BJ (cell line): ENCODE measurements at regions of chr7 and their contacts with region 1.

Region 1: DNA sequence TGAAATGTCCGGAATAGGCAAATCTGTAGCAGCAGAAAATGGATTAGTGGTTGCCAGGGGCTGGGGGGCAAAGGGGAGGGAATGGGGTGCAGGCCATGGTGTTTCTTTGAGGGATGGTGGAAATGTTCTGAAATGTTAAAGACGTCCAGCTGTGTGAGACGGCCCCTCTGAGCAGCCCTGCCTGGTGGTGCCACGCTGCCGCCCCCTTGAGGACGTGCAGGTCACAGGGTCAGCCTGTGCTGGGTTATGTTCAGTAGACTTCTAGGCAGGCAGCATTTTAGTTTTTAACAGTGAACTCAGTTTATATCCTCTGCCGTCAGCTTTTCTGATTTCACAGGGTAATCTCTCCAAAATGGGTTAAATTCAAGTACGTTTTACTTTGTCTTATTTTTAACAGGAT is 9.4 kb downstream of the NUB1 start:
- DNase-seq: no peak
- H3K4me3 ChIP-seq: no peak overlapping the region
- H3K27me3 ChIP-seq: no peaks in the 10 kb centered on the region
- CTCF ChIP-seq: 0 out of 2 replicates have a peak, but pooled peaks have one; percentile 17

Region 2: DNA sequence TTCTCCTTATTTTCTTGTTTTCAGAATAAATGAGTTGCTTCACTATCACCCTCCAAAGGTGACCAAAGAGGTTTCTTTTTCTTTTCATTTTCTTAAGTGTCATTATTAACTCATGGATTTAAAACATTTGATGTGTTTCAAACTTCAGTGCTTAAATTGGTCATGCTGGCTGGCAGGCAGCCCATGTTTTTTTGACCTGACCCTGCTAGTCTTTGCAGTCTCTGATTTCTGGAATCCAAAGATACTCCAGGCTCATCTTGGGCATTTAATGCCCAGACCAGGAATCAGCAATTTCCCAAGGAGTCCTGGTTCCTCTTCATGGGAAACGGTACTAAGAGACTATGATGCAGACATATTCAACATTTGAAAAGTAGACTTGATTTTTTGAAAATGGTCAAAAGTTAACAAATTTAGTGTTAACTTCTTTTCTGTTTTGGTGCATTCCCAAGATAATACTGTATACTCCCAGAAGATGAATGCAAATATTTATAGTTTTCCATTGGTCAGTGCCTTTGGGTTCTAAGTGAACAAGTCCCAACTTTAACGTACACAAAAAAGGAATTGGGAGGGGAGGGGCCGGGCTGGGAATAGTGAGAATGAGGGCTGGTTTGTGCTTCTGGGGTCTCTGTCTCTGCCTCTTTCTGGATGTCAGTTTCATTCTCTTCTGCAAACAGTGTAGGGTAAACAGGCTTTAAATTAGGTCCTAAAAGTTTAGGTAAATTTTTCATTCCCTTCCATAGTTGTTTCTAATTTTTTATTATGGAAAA is 10.3 kb after region 1 on chr7:
- CTCF ChIA-PET with region 1: interaction called, 17 read pairs
- POLR2A ChIA-PET with region 1: no interaction called
- DNase-seq: no peak
- H3K4me3 ChIP-seq: no peak overlapping the region
- H3K27me3 ChIP-seq: no peaks in the 10 kb centered on the region
- CTCF ChIP-seq: no peak

Region 3: DNA sequence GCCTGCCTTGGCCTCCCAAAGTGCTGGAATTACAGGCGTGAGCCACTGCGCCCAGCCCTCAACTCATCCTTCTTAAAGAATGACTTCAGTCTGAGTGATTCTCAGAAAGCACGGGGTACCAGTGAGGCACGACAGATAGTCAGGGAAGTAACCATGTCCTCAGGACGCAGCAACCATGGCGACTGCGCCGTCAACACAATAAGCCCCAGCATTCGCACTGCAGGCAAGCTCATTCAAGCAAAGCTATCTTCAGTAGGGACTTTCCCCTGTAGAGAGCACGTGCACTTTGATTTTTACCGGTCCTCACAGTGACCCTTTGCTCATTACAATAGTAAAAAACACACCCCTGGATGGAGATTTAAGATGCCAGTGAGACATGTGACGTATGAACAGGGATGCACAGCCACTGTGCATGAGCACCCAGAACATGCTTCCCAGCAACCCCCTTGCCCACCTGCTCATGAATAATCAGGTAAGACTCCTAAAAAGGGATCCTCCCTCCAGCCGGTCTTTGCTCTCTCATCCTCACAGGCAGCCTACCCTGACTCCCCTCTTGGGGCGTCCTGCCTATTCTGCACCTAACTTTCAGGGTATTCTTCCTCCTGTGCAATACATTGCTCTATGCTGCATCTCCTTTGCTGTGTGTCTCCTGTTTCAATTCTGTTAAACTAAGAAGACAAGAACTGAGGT is 49.7 kb after region 1 on chr7:
- CTCF ChIA-PET with region 1: no interaction called
- POLR2A ChIA-PET with region 1: no interaction called
- DNase-seq: no peak
- H3K4me3 ChIP-seq: no peak overlapping the region
- H3K27me3 ChIP-seq: peaks cover 6% of the 10 kb centered on the region
- CTCF ChIP-seq: no peak

Region 4: GRCh38 chr7:151411551-151411950 is 60.5 kb after region 1 on chr7:
- CTCF ChIA-PET with region 1: no interaction called
- POLR2A ChIA-PET with region 1: no interaction called
- DNase-seq: no peak
- H3K4me3 ChIP-seq: no peak overlapping the region
- H3K27me3 ChIP-seq: peaks cover 44% of the 10 kb centered on the region
- CTCF ChIP-seq: no peak